ENCODE measurements at regions of chr19 and their contacts with region 1.

Region 1: DNA sequence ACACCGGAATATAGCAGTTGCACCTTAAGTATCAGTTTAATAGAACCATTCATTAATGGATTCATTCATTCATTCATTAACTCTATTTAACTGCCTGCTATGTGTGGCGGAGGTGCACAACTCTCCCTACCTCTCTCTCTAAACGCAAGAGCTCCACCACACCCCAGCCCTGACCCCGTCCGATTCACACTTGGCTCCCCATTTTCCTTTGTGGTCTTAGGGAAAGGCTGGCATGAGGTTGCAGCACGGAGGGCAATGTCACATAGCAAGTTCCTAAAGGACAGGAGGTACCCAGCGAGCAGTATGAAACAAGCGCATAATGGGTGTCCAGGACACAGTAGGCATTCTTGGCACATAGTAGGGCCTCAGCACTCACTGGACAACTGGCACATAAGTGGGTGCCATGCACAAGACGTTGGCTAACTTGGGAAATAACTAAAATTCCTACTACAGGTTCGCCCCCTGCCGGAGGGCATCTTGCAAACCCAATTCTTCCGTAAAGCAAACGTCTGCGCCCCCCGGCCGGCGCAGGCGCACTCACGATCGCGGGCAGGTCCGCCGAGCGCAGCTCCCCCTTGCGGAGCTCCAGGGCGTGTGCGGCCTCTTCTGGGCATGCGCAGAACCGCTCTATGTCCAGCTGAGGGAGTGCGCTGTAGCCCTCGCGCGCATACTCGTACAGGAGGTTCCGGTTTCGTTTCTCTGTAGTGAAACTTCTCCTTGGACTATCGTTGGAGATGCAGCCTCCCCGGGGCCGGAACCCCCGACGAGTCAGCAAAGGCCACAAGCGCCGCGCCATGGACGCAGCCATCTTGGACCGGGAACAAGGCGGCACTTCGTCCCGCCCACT is at the start of gene SARS2:
- DNase-seq: peak; percentile 96 to 99 (median 98)
- ATAC-seq: peak; percentile 74
- H3K4me3 ChIP-seq: peak within 1 kb of the TSS; percentile 71
- H3K27ac ChIP-seq: peak within 1 kb of the TSS; percentile 92
- H3K4me1 ChIP-seq: peaks cover 0 to 18% of the 10 kb centered on the region in 2 experiments; a peak in 3 of 5 replicates
- H3K27me3 ChIP-seq: no peaks in the 10 kb centered on the region
- CTCF ChIP-seq: peak; percentile 98 to 99 (median 98)
- EP300 ChIP-seq: peak; percentile 21; the same call in 1 of the 2 replicates
- POLR2A ChIP-seq: peak; percentile 96
- RAD21 ChIP-seq: peak; percentile 81 to 83
- polyA plus RNA-seq, gene SARS2: 3.1 to 7.0 TPM

Region 2: DNA sequence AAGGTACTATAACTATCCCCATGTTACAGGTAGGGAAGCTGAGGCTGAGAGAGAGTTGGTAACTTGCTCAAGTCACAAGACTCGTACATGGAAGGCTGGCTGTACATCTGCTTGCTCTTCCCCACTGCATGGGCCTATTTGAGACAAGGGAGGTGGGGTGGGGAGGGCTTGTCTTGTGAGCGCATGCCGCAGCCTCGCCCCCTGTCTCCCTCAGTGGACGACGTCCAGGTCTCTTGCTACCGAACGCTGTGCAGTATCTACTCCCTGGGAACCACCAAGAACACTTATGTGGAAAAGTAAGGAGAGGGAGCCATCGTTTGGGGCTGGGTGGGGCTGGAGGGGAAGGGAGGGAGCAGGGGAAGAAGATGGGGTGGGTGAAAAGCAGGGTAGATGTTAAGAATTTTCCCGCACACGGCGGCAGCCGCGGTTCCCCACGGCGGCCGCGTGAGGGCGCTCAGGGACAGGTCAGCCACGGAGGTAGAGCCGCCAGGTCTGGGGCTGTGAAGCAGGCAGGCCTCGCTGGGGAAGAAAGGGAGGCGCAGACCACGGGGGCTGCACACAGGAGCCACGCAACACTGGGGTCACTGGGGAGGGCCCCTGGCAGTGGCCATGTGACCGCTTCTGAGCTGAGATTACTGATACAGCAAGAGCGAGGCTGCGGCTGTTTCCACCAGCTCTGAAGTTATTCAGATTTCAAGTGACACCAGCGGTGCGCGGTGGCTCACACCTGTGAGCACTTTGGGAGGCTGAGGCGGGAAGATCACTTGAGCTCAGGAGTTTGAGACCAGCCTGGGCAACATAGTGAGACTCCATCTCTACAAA is 415.1 kb before region 1 on chr19:
- CTCF ChIA-PET with region 1: interaction called, 16 read pairs
- POLR2A ChIA-PET with region 1: no interaction called
- in situ Hi-C with region 1: loop called (anchors 10 kb)
- intact Hi-C with region 1: loop called (anchors 10 kb)
- DNase-seq: peak; percentile 84 to 87 (median 86)
- ATAC-seq: peak; percentile 98
- H3K4me3 ChIP-seq: no peak overlapping the region
- H3K27ac ChIP-seq: no peak overlapping the region
- H3K4me1 ChIP-seq: peaks cover 6 to 27% of the 10 kb centered on the region in 2 experiments; a peak in 4 of 5 replicates
- H3K27me3 ChIP-seq: no peaks in the 10 kb centered on the region
- CTCF ChIP-seq: peak; percentile 86 to 93 (median 90)
- EP300 ChIP-seq: no peak
- POLR2A ChIP-seq: no peak
- RAD21 ChIP-seq: peak; percentile 88 to 92

Region 3: DNA sequence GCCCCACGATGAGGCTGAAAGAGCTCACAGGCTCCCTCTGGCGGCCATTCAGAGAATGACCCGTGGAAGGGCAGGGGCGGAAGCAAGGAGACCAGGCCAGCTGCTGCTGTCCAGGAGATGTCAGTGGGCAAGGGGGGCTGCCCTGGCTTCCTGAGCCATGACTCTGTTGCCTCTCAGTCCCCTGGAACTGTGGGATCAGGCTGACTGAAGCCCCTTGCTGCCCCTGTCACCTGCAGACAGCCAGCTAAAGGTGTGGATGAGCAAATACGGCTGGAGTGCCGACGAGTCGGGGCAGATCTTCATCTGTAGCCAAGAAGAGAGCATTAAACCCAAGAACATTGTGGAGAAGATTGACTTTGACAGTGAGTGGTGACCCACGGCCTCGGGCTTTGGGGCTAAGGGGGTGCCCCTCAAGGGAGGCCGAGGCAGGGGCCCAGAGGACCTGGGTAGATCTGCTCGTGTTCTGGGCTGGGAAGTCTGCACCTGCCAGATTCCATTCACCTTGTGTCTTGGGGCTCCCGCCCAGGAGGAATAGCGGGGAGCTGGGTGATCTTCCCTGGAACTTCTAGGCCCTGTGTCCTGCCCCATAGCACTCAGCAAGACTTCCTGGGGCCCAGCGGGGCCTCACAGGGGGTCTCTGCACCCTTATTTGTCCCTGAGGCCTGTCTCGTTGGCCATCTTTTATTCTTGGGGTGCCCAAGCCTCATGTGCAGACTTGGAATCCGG is 295.2 kb before region 1 on chr19:
- CTCF ChIA-PET with region 1: interaction called, 7 read pairs
- POLR2A ChIA-PET with region 1: no interaction called
- in situ Hi-C with region 1: no loop called
- intact Hi-C with region 1: loop called (anchors 2 kb)
- DNase-seq: peak; percentile 74 to 82 (median 76)
- ATAC-seq: peak; percentile 62
- H3K4me3 ChIP-seq: no peak overlapping the region
- H3K27ac ChIP-seq: no peak overlapping the region
- H3K4me1 ChIP-seq: peaks cover 14 to 37% of the 10 kb centered on the region in 2 experiments; a peak in 4 of 5 replicates
- H3K27me3 ChIP-seq: no peaks in the 10 kb centered on the region
- CTCF ChIP-seq: peak; percentile 84 to 93 (median 90)
- EP300 ChIP-seq: no peak
- POLR2A ChIP-seq: peak; percentile 54; the same call in 1 of the 2 replicates
- RAD21 ChIP-seq: peak; percentile 77 to 82; a peak in 3 of 4 replicates

Region 4: GRCh38 chr19:38683393-38684080 is 246.6 kb before region 1 on chr19:
- CTCF ChIA-PET with region 1: no interaction called
- POLR2A ChIA-PET with region 1: no interaction called
- in situ Hi-C with region 1: no loop called
- intact Hi-C with region 1: no loop called
- DNase-seq: peak; percentile 75 to 89 (median 80)
- ATAC-seq: peak; percentile 87
- H3K4me3 ChIP-seq: no peak overlapping the region
- H3K27ac ChIP-seq: peak overlapping the region; percentile 98
- H3K4me1 ChIP-seq: peaks cover 77 to 91% of the 10 kb centered on the region in 2 experiments
- H3K27me3 ChIP-seq: no peaks in the 10 kb centered on the region
- CTCF ChIP-seq: no peak
- EP300 ChIP-seq: peak; percentile 55; the same call in 1 of the 2 replicates
- POLR2A ChIP-seq: no peak
- RAD21 ChIP-seq: no peak

Region 5: DNA sequence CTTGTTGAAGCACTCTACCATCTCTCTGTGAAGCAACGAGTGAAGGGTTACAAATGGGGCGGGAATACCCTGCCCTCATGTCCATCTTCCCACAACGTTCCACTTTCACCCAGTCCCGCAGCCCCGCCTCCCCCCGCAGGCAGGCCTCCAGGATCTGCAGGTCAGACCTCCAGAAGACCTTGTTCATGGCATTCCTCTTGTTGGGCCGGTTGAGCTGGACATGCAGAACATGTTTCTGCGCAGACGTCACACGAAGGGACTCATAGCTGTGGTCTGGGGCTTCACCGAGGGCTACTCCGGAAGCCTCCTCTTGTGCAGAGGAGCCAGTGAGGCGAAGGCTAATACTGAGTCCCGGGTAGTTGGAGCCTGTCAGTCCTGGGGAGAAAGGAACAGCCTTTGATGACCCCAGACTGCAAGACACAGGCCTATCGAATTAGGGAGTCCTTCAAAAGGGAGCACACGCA is 99.0 kb before region 1 on chr19:
- CTCF ChIA-PET with region 1: no interaction called
- POLR2A ChIA-PET with region 1: interaction called, 4 read pairs
- in situ Hi-C with region 1: no loop called
- intact Hi-C with region 1: loop called (anchors 5 kb)
- DNase-seq: peak in 2 of 4 experiments; percentile 53 to 66
- ATAC-seq: peak; percentile 55
- H3K4me3 ChIP-seq: peak overlapping the region; percentile 39
- H3K27ac ChIP-seq: peak overlapping the region; percentile 82
- H3K4me1 ChIP-seq: peaks cover 13 to 29% of the 10 kb centered on the region in 2 experiments; a peak in 4 of 5 replicates
- H3K27me3 ChIP-seq: no peaks in the 10 kb centered on the region
- CTCF ChIP-seq: no peak
- EP300 ChIP-seq: no peak
- POLR2A ChIP-seq: no peak
- RAD21 ChIP-seq: no peak; a peak in 1 of 4 replicates

Region 6: GRCh38 chr19:38842439-38843174 is 87.5 kb before region 1 on chr19:
- CTCF ChIA-PET with region 1: no interaction called
- POLR2A ChIA-PET with region 1: no interaction called
- in situ Hi-C with region 1: no loop called
- intact Hi-C with region 1: no loop called
- DNase-seq: peak in 1 of 4 experiments; percentile 2
- ATAC-seq: no peak
- H3K4me3 ChIP-seq: no peak overlapping the region
- H3K27ac ChIP-seq: peak overlapping the region; percentile 10; the same call in 2 of the 3 replicates
- H3K4me1 ChIP-seq: peaks cover 3 to 16% of the 10 kb centered on the region in 2 experiments; a peak in 4 of 5 replicates
- H3K27me3 ChIP-seq: no peaks in the 10 kb centered on the region
- CTCF ChIP-seq: no peak
- EP300 ChIP-seq: no peak
- POLR2A ChIP-seq: no peak
- RAD21 ChIP-seq: no peak

Region 7: DNA sequence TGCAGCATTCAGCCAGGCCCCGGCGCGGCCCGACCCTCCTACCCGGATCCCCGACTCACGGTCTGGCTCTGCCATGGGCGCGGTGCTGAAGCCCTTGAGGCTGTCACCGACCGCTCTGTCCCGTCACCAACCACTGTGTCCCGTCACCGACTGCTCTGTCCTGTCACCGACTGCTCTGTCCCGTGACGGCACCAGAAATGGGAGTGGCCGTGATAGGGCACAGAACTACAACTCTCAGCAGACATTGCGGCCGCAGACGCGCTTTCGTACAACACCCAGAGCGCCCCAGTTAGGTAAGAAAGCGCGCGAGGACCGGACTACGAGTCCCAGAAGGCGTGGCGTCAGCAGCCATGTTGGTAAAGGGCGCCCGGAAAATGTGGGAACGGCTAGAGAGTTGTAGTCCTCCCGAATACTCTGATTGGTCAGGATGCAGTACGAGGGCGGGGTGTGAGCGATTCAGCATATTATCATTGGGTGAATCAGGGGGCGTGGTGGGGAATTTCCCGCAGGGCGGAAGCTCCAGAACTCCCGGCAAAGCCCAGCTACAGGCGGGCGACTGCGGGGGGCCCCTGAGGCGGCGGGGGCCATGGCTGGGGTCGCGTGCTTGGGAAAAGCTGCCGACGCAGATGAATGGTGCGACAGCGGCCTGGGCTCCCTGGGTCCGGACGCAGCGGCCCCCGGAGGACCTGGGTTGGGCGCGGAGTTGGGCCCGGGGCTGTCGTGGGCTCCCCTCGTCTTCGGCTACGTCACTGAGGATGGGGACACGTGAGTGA is 30.5 kb before region 1 on chr19 and contains the starts of genes NFKBIB and SIRT2:
- CTCF ChIA-PET with region 1: no interaction called
- POLR2A ChIA-PET with region 1: interaction called, 3 read pairs
- in situ Hi-C with region 1: no loop called
- intact Hi-C with region 1: loop called (anchors 1 kb)
- DNase-seq: peak; percentile 97 to 100 (median 98)
- ATAC-seq: peak; percentile 97
- H3K4me3 ChIP-seq: peak within 1 kb of the TSS; percentile 85
- H3K27ac ChIP-seq: peak within 1 kb of the TSS; percentile 82
- H3K4me1 ChIP-seq: peaks cover 11 to 28% of the 10 kb centered on the region in 2 experiments
- H3K27me3 ChIP-seq: no peaks in the 10 kb centered on the region
- CTCF ChIP-seq: peak in 1 of 3 experiments; percentile 27; a peak in 2 of 6 replicates
- EP300 ChIP-seq: no peak
- POLR2A ChIP-seq: peak; percentile 66
- RAD21 ChIP-seq: no peak
- polyA plus RNA-seq, gene NFKBIB: 1.5 to 1.7 TPM
- polyA plus RNA-seq, gene SIRT2: 2.3 to 7.1 TPM

Measured in K562 (cell line).